Sigmoid colon (tissue), 7 donors: ENCODE measurements at regions of chr1 and their contacts with region 1.

Region 1: DNA sequence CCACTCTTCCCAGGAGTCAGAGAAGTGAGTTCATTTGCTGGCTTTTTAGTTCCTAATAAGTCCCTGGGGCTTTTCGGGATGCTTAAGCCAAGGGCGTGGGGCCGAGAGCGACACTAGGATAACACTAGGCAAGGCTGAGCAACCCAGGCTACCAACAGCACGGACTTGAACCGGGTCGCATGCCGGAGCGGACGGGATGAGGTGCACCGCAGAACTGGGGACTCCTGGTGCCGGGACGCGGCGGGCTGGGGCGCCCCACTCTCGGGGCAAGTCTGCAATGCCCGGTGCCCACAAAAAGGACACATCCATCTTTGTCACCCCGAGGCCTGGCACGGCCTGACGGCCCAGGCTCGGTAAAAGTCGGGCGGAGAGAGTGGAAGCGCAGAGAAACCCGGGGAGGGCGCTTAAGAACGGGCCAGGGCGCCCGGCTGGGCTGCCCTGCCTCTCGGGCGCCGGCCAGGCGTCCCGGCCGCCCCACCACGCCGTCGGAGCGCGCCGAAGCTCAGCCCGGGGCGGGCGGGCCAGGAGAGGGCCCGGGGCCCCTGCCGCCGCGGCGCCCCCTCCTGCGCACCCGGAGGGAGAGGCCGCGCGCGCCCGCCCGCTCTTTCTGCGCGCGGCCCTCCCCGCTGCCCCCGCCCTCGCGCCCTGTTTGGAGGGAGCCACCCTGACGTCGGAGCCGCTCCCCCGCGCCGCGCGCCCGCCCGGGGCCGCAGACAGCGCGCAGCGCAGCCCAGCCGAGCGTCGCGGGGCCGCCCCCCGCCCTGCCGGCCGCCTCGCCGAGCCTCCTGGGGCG is at the start of gene NBL1:
- DNase-seq: peak; percentile 90
- H3K4me3 ChIP-seq: peak within 1 kb of the TSS; percentile 75 to 89 (median 84)
- H3K27ac ChIP-seq: peak within 1 kb of the TSS; percentile 93 to 97 (median 94)
- H3K4me1 ChIP-seq: peaks cover 0 to 50% (median 39%) of the 10 kb centered on the region in 4 donors
- H3K27me3 ChIP-seq: no peaks in the 10 kb centered on the region
- CTCF ChIP-seq: no peak
- EP300 ChIP-seq: no peak
- POLR2A ChIP-seq: no peak
- total RNA-seq, gene NBL1: 64.1 to 128 (median 87.6) TPM

Region 2: GRCh38 chr1:19251305-19252196 is 392.2 kb before region 1 on chr1 and contains the starts of genes EMC1 and MRTO4:
- intact Hi-C with region 1: loop called (anchors 5 kb)
- DNase-seq: peak; percentile 85
- H3K4me3 ChIP-seq: peak within 1 kb of the TSS; percentile 76 to 91 (median 87)
- H3K27ac ChIP-seq: peak within 1 kb of the TSS; percentile 91 to 97 (median 92)
- H3K4me1 ChIP-seq: peaks cover 0 to 41% (median 35%) of the 10 kb centered on the region in 4 donors
- H3K27me3 ChIP-seq: no peaks in the 10 kb centered on the region
- CTCF ChIP-seq: no peak
- EP300 ChIP-seq: no peak
- POLR2A ChIP-seq: no peak
- total RNA-seq, gene EMC1: 19.6 to 46.5 (median 31.3) TPM
- total RNA-seq, gene MRTO4: 10.8 to 21.3 (median 15.3) TPM

Region 3: DNA sequence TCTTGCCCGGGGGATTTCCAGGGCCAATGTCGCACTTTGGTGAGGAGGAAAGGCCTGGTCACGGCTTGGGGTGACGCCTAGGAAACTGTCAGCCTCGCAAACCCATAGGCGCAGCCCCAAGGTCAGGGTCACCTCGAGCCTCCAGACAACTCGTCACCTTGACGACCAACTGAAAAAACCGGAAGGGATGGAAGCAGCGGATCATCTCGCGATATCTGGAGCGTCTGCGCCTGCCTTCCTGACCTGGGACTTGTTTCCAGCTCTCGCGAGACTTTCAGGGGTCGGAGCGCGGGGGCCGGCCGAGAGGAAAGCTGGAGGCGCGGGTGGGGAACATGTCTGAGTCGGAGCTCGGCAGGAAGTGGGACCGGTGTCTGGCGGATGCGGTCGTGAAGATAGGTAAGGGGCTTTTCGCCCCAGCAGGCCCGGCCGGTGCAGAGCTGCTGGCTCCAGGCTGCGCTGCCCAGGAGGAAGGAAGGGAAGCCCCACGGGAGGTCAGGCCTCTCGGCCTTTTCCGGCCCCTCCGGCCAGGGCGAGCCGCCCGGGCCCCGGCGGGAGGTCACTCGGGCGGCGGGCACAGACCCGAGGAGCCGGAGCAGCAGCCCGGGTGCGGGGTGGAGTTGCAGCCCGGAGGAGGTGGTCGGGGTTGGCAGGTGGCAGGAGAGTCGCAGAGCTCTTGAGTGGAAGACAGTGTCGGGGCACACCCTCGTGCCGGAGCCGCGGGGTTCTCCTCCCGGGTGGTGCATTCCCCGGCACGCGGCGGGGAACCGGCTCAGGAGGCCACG is 46.9 kb before region 1 on chr1:
- intact Hi-C with region 1: loop called (anchors 5 kb)
- DNase-seq: peak; percentile 99
- H3K4me3 ChIP-seq: peak overlapping the region; percentile 64 to 95 (median 94)
- H3K27ac ChIP-seq: peak overlapping the region; percentile 89 to 98 (median 98)
- H3K4me1 ChIP-seq: peaks cover 0 to 52% (median 38%) of the 10 kb centered on the region in 4 donors
- H3K27me3 ChIP-seq: no peaks in the 10 kb centered on the region
- CTCF ChIP-seq: no peak
- EP300 ChIP-seq: no peak
- POLR2A ChIP-seq: peak; percentile 76 to 88